Cardiac septum (tissue), 1 donor: ENCODE measurements at regions of chr22 and their contacts with region 1.

Region 1: DNA sequence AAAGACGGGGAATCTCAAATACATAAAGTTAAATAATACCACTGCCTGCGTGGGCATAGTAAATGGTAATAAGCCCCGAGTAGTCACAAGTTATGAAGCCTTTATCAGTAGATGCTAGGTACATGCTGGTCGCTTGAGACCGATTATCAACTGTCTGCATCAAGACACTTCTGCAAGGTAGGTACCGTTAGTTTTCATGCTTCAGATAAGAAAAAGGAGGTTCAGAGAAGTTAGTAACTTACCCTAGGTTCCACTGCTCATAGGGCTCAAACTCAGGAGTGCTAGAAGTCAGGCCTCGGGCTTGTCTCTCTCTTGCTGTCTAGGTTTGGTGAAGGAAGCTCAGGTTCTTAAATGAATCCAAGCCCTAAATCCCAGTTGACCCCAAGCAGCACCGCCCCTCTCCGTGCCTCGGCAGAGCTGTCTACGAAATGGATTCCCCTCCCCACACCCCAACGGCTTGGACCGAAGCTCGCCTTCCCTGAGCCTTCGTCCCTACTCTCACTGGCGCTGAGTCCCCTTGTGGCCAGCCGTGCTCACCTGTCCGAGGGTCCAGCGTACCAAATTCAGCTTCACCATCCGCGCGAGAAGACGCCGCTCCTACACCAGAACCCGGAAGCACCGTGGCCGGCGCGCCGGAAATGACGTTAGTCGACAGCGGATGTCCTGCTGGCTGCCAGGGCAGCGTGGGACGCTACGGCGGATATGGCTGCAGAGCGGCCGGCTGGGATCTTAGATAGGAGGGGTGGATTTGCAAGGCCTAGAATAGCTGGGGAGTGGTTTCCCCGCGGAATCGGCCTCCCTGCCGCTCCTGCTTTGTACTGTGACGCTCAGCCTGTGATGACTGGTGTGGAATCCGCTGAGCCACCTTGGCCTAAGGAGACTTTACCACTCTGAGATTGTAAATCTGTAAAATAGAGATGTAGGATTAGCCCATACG is at the start of gene TFIP11:
- DNase-seq: peak; percentile 98
- total RNA-seq, gene TFIP11: 18.0 TPM

Region 2: DNA sequence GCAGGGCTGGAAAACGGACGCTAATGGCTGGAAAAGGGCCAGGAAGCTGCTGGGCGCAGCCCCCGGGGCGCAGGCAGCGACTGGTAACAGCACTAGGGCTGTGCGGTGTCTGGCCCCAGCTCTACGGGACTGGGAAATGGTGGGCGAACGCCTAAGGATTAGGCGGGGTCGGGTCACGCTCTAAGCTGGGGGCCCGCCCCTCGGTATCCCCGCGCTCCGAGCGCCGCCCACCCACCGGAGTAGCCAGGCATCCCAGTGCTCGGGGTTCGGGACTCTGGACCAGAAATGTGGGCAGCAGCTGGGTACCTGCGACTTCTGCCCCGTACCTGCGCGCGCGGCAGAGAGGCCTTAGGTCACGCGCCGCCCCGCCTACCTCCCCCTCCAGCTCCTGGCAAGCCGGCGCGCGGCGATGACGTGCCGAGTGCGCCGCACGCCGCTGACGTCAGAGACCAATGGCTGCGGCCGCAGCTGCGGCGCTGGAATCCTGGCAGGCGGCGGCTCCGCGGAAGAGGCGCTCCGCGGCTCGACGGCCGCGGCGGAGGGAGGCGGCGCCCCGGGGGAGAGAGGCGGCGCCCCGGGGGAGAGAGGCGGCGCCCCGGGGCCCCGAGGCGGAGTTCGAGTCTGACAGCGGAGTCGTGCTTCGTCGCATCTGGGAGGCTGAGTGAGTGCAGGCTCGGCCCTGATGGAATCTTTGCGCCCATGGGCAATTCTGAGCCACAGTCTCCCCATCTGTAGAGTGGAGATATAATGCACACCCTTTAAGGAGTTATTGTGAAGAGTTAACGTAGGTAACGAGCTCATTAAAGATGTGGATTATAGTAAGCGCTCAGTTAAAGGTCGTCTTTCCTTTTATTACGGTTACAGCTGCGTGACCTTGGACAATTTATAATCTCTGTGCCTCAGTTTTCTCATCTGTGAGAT is 28.4 kb before region 1 on chr22 and contains the starts of genes HPS4 and SRRD:
- intact Hi-C with region 1: loop called (anchors 2 kb)
- DNase-seq: peak; percentile 94
- total RNA-seq, gene HPS4: 11.9 TPM
- total RNA-seq, gene SRRD: 14.5 TPM